ENCODE measurements at regions of chr19 and their contacts with region 1.

Region 1: DNA sequence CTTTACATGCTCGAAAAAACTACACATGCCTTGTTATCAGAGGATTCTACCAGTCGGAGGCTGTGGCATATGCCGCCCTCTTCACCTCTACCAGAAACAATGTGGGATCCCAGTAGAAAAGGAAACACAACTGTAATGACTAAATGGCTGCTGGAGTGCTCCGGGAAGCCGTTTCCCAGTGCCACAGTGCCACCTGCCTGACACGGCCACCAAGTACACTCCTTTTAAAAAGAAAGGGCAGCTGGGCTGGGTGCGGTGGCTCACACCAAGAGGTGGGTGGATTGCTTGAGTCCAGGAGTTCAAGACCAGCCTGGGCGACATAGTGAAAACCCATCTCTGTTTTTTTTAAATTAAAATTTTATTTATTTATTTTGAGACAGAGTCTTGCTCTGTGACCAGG is 67.3 kb downstream of the TRPM4 start:
- DNase-seq: peak; percentile 44
- ATAC-seq: no peak
- H3K4me3 ChIP-seq: no peak overlapping the region
- H3K4me3 Mint-ChIP-seq: no peak overlapping the region
- H3K27ac ChIP-seq: no peak overlapping the region
- H3K27ac Mint-ChIP-seq: no peak overlapping the region
- H3K4me1 ChIP-seq: peaks cover 0 to 8% of the 10 kb centered on the region in 2 donors
- H3K4me1 Mint-ChIP-seq: peaks cover 8% of the 10 kb centered on the region
- H3K27me3 ChIP-seq: no peaks in the 10 kb centered on the region
- H3K27me3 Mint-ChIP-seq: peaks cover 7% of the 10 kb centered on the region
- CTCF ChIP-seq: peak; percentile 23

Region 2: DNA sequence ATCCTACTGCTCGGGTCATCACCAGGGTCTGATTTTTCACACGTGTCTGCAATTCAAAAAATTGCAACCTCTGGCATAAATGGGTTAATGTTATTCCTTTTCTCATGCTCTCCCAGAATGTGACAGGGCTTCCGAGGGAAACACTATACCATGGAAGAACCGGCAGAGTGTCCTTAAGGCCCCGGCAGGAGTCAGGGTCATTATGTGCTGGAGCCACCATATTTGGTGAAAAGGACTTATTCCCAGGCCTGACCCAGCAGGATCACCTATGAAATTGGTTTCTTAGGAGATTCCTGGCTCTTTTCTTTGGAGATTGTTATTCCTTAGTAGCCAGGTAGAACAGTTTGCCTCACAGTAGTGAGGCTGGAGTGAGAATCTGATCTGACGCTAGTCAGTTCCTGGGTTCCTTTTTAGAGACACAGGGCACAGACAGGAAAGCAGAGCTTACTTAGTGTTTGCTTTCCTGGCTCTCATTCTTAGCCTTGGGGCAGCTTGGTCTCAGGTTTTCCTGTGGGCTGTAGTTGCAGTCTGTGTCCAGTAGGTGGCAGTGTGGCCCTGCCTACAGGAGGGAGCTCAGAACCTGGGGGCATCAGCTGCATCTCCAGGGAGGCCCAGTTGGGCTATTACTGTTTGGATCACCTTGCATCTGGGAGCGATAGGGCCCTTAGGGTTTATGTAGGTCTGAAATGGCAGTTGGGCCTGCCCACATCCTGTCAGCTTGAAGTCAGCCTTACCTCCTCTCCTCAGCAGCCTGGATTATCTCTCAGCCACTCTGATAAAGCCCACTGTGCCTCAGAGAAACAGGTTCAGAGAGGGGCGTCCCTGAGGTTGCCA is 127.2 kb before region 1 on chr19:
- CTCF ChIA-PET with region 1: interaction called, 35 read pairs
- POLR2A ChIA-PET with region 1: no interaction called
- intact Hi-C with region 1: loop called (anchors 1 kb)
- DNase-seq: peak; percentile 84
- ATAC-seq: peak; percentile 95
- H3K4me3 ChIP-seq: no peak overlapping the region
- H3K4me3 Mint-ChIP-seq: no peak overlapping the region
- H3K27ac ChIP-seq: no peak overlapping the region
- H3K27ac Mint-ChIP-seq: no peak overlapping the region
- H3K4me1 ChIP-seq: no peaks in the 10 kb centered on the region
- H3K4me1 Mint-ChIP-seq: peaks cover 4% of the 10 kb centered on the region
- H3K27me3 ChIP-seq: no peaks in the 10 kb centered on the region
- H3K27me3 Mint-ChIP-seq: no peaks in the 10 kb centered on the region
- CTCF ChIP-seq: peak; percentile 99

Region 3: DNA sequence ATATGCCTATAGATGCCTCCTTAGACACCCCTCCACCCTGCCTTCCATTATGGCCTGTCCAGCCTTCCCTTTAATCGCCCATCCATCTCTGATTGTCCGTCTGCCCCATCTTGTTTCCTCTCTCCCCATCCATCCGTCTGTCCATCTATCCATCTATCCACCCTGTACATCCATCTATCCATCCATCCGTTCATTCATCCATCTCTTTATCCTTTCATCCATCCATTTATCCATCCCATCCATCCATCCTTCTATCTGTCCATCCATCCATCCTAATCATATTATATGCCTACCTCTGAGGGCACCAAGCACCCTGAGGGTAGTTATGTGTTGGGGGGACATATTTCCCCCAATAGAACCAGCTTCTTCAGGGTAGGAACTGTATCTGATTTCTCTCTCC is 44.2 kb before region 1 on chr19:
- CTCF ChIA-PET with region 1: no interaction called
- POLR2A ChIA-PET with region 1: no interaction called
- intact Hi-C with region 1: no loop called
- DNase-seq: no peak
- ATAC-seq: no peak
- H3K4me3 ChIP-seq: no peak overlapping the region
- H3K4me3 Mint-ChIP-seq: no peak overlapping the region
- H3K27ac ChIP-seq: no peak overlapping the region
- H3K27ac Mint-ChIP-seq: no peak overlapping the region
- H3K4me1 ChIP-seq: peaks cover 0 to 3% of the 10 kb centered on the region in 2 donors
- H3K4me1 Mint-ChIP-seq: peaks cover 4% of the 10 kb centered on the region
- H3K27me3 ChIP-seq: peaks cover 0 to 7% (median 0%) of the 10 kb centered on the region in 4 experiments
- H3K27me3 Mint-ChIP-seq: peaks cover 5% of the 10 kb centered on the region
- CTCF ChIP-seq: no peak

Region 4: DNA sequence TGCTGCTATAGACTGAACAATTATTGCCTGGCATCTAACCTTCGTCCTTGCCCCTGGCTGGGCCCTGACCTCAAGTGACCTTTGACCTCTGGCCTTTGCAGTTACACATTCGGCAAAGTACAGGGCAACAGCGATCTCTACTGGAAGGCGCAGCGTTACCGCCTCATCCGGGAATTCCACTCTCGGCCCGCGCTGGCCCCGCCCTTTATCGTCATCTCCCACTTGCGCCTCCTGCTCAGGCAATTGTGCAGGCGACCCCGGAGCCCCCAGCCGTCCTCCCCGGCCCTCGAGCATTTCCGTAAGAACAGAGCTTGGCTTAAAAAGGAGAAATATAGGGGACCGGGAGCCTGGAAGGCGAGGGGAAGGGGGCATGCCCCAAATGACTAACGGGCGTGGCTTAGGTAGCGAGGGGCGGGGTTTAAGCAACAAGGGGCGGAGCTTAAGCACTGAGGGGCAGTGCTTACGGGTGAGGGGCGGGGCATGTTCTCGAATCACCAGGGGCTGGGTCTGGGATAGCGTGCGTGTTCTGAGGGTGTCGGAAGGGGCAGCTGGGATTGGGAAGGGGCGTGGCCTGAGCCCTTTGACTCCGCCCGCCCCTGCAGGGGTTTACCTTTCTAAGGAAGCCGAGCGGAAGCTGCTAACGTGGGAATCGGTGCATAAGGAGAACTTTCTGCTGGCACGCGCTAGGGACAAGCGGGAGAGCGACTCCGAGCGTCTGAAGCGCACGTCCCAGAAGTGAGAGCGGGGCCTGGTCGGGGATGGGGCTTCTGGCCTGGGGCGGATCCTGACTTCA is 14.6 kb before region 1 on chr19:
- CTCF ChIA-PET with region 1: interaction called, 13 read pairs
- POLR2A ChIA-PET with region 1: no interaction called
- intact Hi-C with region 1: no loop called
- DNase-seq: peak; percentile 62
- ATAC-seq: peak; percentile 67
- H3K4me3 ChIP-seq: no peak overlapping the region
- H3K4me3 Mint-ChIP-seq: peak overlapping the region; percentile 18
- H3K27ac ChIP-seq: no peak overlapping the region
- H3K27ac Mint-ChIP-seq: peak overlapping the region; percentile 61
- H3K4me1 ChIP-seq: peaks cover 12 to 37% of the 10 kb centered on the region in 2 donors
- H3K4me1 Mint-ChIP-seq: peaks cover 41% of the 10 kb centered on the region
- H3K27me3 ChIP-seq: no peaks in the 10 kb centered on the region
- H3K27me3 Mint-ChIP-seq: no peaks in the 10 kb centered on the region
- CTCF ChIP-seq: no peak

Region 5: GRCh38 chr19:49331616-49332055 is 106.8 kb after region 1 on chr19:
- CTCF ChIA-PET with region 1: no interaction called
- POLR2A ChIA-PET with region 1: no interaction called
- intact Hi-C with region 1: no loop called
- DNase-seq: peak; percentile 83
- ATAC-seq: peak; percentile 29
- H3K4me3 ChIP-seq: peak overlapping the region in 1 of 5 experiments; percentile 35
- H3K4me3 Mint-ChIP-seq: peak overlapping the region; percentile 65
- H3K27ac ChIP-seq: peak overlapping the region; percentile 93 to 98
- H3K27ac Mint-ChIP-seq: peak overlapping the region; percentile 99
- H3K4me1 ChIP-seq: peaks cover 79 to 89% of the 10 kb centered on the region in 2 donors
- H3K4me1 Mint-ChIP-seq: peaks cover 82% of the 10 kb centered on the region
- H3K27me3 ChIP-seq: no peaks in the 10 kb centered on the region
- H3K27me3 Mint-ChIP-seq: no peaks in the 10 kb centered on the region
- CTCF ChIP-seq: no peak

Region 6: GRCh38 chr19:49443366-49444099 is 218.7 kb after region 1 on chr19:
- CTCF ChIA-PET with region 1: interaction called, 17 read pairs
- POLR2A ChIA-PET with region 1: no interaction called
- intact Hi-C with region 1: no loop called
- DNase-seq: peak; percentile 98
- ATAC-seq: peak; percentile 85
- H3K4me3 ChIP-seq: peak overlapping the region; percentile 12 to 80 (median 71)
- H3K4me3 Mint-ChIP-seq: peak overlapping the region; percentile 93
- H3K27ac ChIP-seq: peak overlapping the region; percentile 65 to 72
- H3K27ac Mint-ChIP-seq: peak overlapping the region; percentile 95
- H3K4me1 ChIP-seq: peaks cover 18 to 31% of the 10 kb centered on the region in 2 donors
- H3K4me1 Mint-ChIP-seq: peaks cover 35% of the 10 kb centered on the region
- H3K27me3 ChIP-seq: peaks cover 2 to 39% (median 34%) of the 10 kb centered on the region in 4 experiments
- H3K27me3 Mint-ChIP-seq: peaks cover 37% of the 10 kb centered on the region
- CTCF ChIP-seq: peak; percentile 89

Region 7: DNA sequence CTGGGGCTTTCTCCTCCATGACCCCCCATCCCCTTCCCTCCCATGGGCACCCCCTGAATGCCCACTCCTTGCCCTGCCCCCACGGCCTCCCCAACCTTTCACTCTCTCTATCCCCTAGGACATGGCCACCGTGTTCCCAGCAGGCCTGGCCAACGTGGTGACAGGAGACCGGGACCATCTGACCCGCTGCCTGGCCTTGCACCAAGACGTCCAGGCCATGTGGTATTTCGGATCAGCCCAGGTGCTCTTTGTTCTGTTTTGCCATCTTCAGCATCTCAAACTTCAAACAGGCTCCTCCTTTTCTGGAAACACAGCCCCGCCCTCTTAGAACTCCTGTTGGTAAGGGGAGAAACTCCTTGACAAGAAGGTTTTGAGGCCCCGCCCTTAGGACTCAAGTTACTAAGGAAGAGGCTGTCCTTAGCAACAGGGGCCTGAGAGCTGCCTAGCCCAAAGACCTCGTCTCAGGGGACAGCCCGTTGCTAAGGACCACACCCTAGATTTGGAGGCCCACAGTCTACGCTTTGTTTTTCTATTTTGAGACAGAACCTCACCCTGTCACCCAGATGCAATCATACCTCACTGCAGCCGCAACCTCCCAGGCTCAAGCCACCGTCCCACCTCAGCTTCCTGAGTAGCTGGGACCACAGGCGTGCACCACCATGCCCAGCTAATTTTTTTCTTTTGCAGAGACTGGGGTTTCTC is 244.0 kb after region 1 on chr19:
- CTCF ChIA-PET with region 1: interaction called, 34 read pairs
- POLR2A ChIA-PET with region 1: no interaction called
- intact Hi-C with region 1: loop called (anchors 1 kb)
- DNase-seq: peak; percentile 98
- ATAC-seq: peak; percentile 75
- H3K4me3 ChIP-seq: peak overlapping the region in 1 of 5 experiments; percentile 18
- H3K4me3 Mint-ChIP-seq: peak overlapping the region; percentile 74
- H3K27ac ChIP-seq: peak overlapping the region; percentile 96 to 98
- H3K27ac Mint-ChIP-seq: peak overlapping the region; percentile 98
- H3K4me1 ChIP-seq: peaks cover 44 to 57% of the 10 kb centered on the region in 2 donors
- H3K4me1 Mint-ChIP-seq: peaks cover 41% of the 10 kb centered on the region
- H3K27me3 ChIP-seq: no peaks in the 10 kb centered on the region
- H3K27me3 Mint-ChIP-seq: no peaks in the 10 kb centered on the region
- CTCF ChIP-seq: no peak

Region 8: GRCh38 chr19:49473868-49474544 is 249.2 kb after region 1 on chr19 and contains the start of gene FLT3LG:
- CTCF ChIA-PET with region 1: interaction called, 34 read pairs
- POLR2A ChIA-PET with region 1: no interaction called
- intact Hi-C with region 1: loop called (anchors 1 kb)
- DNase-seq: peak; percentile 94
- ATAC-seq: peak; percentile 52
- H3K4me3 ChIP-seq: peak within 1 kb of the TSS in 4 of 5 experiments; percentile 53 to 98 (median 70)
- H3K4me3 Mint-ChIP-seq: peak within 1 kb of the TSS; percentile 93
- H3K27ac ChIP-seq: peak within 1 kb of the TSS; percentile 75 to 81
- H3K27ac Mint-ChIP-seq: peak within 1 kb of the TSS; percentile 97
- H3K4me1 ChIP-seq: peaks cover 43 to 73% of the 10 kb centered on the region in 2 donors
- H3K4me1 Mint-ChIP-seq: peaks cover 57% of the 10 kb centered on the region
- H3K27me3 ChIP-seq: no peaks in the 10 kb centered on the region
- H3K27me3 Mint-ChIP-seq: no peaks in the 10 kb centered on the region
- CTCF ChIP-seq: peak; percentile 89
- total RNA-seq, gene FLT3LG: 27.8 and 31.0 TPM in 2 replicates

Region 9: DNA sequence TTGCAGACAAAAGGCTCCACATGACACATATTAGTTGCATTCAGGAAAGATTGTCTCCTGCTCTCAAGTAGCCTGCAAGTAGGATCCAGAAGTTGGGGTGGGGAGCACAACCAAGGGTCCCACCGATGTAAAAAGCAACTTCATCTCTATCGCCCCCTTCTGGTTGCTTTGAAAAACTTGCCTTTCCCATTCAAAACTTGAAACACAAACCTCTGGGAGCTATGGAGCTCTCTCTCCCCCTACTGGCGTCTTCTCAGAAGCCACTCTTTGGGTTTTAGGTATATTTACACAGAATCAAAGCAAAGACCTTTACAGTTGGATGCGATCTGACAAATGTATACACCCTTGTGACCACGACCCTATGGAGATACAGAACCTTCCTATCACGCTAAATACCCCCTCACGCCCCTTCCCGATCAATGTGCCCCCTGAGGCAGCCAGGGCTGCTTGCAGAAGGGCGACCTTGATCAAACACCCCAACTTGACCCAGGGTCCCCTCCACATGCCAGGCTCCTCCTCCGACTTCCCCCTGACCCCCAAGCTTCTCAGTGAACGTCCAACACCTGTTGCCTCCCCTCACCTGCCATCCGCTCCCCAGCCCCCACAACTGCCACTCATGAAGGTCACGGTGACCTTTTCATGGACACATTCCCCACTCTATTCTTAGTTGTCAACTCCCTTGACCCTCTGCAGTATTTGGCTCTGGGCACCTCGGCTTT is 345.4 kb after region 1 on chr19:
- CTCF ChIA-PET with region 1: interaction called, 7 read pairs
- POLR2A ChIA-PET with region 1: no interaction called
- intact Hi-C with region 1: loop called (anchors 1 kb)
- DNase-seq: peak; percentile 89
- ATAC-seq: peak; percentile 82
- H3K4me3 ChIP-seq: no peak overlapping the region
- H3K4me3 Mint-ChIP-seq: peak overlapping the region; percentile 40
- H3K27ac ChIP-seq: peak overlapping the region in 1 of 2 donors; percentile 16
- H3K27ac Mint-ChIP-seq: peak overlapping the region; percentile 71
- H3K4me1 ChIP-seq: peaks cover 12 to 37% of the 10 kb centered on the region in 2 donors
- H3K4me1 Mint-ChIP-seq: peaks cover 25% of the 10 kb centered on the region
- H3K27me3 ChIP-seq: no peaks in the 10 kb centered on the region
- H3K27me3 Mint-ChIP-seq: no peaks in the 10 kb centered on the region
- CTCF ChIP-seq: peak; percentile 100